ENCODE measurements at regions of chr5 and their contacts with region 1.

Region 1: GRCh38 chr5:61331407-61332357 is at the start of gene ZSWIM6:
- DNase-seq: peak; percentile 98
- H3K4me3 ChIP-seq: peak within 1 kb of the TSS; percentile 93 to 96 (median 94)
- H3K27ac ChIP-seq: peak within 1 kb of the TSS; percentile 75
- H3K4me1 ChIP-seq: peaks cover 43% of the 10 kb centered on the region
- H3K27me3 ChIP-seq: no peaks in the 10 kb centered on the region
- CTCF ChIP-seq: no peak
- total RNA-seq, gene ZSWIM6: 9.3 to 9.7 TPM

Region 2: DNA sequence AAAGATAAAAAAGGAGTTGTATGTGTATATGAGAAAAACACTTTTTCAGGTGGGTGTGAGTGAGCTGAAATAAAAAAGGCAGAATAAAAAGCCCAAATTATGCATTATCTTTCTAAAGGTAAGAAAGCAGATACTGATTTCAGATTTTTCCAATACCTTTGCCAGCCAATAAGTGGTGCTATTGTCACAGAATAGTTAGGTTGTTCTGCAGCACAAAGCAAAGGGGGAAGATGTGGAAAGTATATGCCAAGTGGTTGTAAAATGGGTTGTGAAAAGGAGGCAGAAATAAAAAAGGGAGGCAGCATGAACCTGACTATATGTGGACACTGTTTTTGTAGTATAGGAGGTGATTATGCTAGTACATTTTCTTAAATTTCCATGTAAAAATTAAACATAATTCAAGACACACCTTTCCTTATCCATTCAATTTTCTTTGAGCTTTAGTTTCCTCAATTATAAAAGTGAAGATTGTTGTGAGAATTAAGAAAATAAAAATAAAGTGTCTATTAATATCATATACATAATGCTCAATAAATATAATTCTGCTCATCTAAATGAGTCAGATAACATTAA is 276.2 kb before region 1 on chr5:
- CTCF ChIA-PET with region 1: no interaction called
- dilution Hi-C with region 1: no loop called
- in situ Hi-C with region 1: no loop called
- intact Hi-C with region 1: loop called (anchors 1 kb)
- DNase-seq: peak; percentile 40
- H3K4me3 ChIP-seq: no peak overlapping the region
- H3K27ac ChIP-seq: no peak overlapping the region
- H3K4me1 ChIP-seq: peaks cover 34% of the 10 kb centered on the region
- H3K27me3 ChIP-seq: no peaks in the 10 kb centered on the region
- CTCF ChIP-seq: peak; percentile 73 to 85

Region 3: DNA sequence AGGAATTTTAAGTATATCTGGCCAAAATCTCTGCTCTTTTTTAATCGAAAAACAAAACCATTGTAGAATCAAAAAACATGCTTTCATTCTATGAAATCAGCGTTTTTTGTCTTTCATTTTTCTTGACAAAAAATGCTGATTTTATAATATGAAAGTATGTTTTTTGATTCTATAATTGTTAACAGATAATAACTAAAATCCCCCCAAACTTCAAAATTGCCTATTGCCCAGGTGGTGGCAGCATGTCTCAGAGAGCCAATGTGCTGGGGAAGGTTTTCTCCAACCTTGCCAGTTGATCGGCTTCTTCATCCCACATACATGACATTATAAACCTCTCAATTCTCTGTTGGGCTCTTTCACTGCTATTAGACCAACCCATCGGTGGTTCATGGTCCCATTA is 164.3 kb before region 1 on chr5:
- CTCF ChIA-PET with region 1: no interaction called
- dilution Hi-C with region 1: no loop called
- in situ Hi-C with region 1: loop called in 1 of 2 experiments (anchors 10 kb)
- intact Hi-C with region 1: loop called (anchors 1 kb)
- DNase-seq: peak; percentile 32
- H3K4me3 ChIP-seq: no peak overlapping the region
- H3K27ac ChIP-seq: no peak overlapping the region
- H3K4me1 ChIP-seq: peaks cover 5% of the 10 kb centered on the region
- H3K27me3 ChIP-seq: no peaks in the 10 kb centered on the region
- CTCF ChIP-seq: peak; percentile 40 to 62

Region 4: DNA sequence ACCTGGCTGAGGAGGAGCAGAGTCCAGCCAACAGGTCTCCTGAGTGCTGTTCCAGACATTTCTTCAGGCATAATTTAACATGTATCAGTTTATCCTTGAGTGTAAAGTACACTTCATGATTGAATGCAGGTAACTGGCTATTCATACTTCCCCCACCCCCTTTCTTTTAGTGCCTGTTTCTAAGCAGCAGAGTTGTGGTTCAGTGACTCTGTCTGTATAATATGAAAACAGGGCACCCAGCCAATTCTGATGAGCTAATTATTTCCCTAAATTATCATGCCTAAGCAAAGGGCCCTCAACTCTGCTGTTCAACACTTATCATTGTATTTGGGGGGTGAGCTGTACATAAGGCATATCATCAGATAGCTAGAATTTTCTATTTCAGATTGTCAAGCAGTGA is 51.5 kb before region 1 on chr5:
- CTCF ChIA-PET with region 1: no interaction called
- dilution Hi-C with region 1: no loop called
- in situ Hi-C with region 1: no loop called
- intact Hi-C with region 1: loop called (anchors 1 kb)
- DNase-seq: peak; percentile 89
- H3K4me3 ChIP-seq: no peak overlapping the region
- H3K27ac ChIP-seq: peak overlapping the region; percentile 52
- H3K4me1 ChIP-seq: peaks cover 34% of the 10 kb centered on the region
- H3K27me3 ChIP-seq: no peaks in the 10 kb centered on the region
- CTCF ChIP-seq: no peak

Region 5: GRCh38 chr5:61408476-61409168 is 76.9 kb after region 1 on chr5:
- CTCF ChIA-PET with region 1: no interaction called
- dilution Hi-C with region 1: no loop called
- in situ Hi-C with region 1: no loop called
- intact Hi-C with region 1: loop called (anchors 1 kb)
- DNase-seq: peak; percentile 100
- H3K4me3 ChIP-seq: peak overlapping the region; percentile 2 to 54 (median 35)
- H3K27ac ChIP-seq: peak overlapping the region; percentile 100
- H3K4me1 ChIP-seq: peaks cover 21% of the 10 kb centered on the region
- H3K27me3 ChIP-seq: no peaks in the 10 kb centered on the region
- CTCF ChIP-seq: no peak

Region 6: GRCh38 chr5:61631438-61631941 is 299.8 kb after region 1 on chr5:
- CTCF ChIA-PET with region 1: no interaction called
- dilution Hi-C with region 1: no loop called
- in situ Hi-C with region 1: no loop called
- intact Hi-C with region 1: no loop called
- DNase-seq: no peak
- H3K4me3 ChIP-seq: no peak overlapping the region
- H3K27ac ChIP-seq: no peak overlapping the region
- H3K4me1 ChIP-seq: no peaks in the 10 kb centered on the region
- H3K27me3 ChIP-seq: no peaks in the 10 kb centered on the region
- CTCF ChIP-seq: no peak

Region 7: GRCh38 chr5:61658592-61659008 is 326.9 kb after region 1 on chr5:
- CTCF ChIA-PET with region 1: no interaction called
- dilution Hi-C with region 1: no loop called
- in situ Hi-C with region 1: no loop called
- intact Hi-C with region 1: loop called (anchors 1 kb)
- DNase-seq: peak; percentile 55
- H3K4me3 ChIP-seq: no peak overlapping the region
- H3K27ac ChIP-seq: no peak overlapping the region
- H3K4me1 ChIP-seq: no peaks in the 10 kb centered on the region
- H3K27me3 ChIP-seq: no peaks in the 10 kb centered on the region
- CTCF ChIP-seq: peak; percentile 92 to 95

Region 8: GRCh38 chr5:61809651-61810050 is 478.0 kb after region 1 on chr5:
- CTCF ChIA-PET with region 1: no interaction called
- dilution Hi-C with region 1: no loop called
- in situ Hi-C with region 1: no loop called
- intact Hi-C with region 1: no loop called
- DNase-seq: peak; percentile 91
- H3K4me3 ChIP-seq: no peak overlapping the region
- H3K27ac ChIP-seq: no peak overlapping the region
- H3K4me1 ChIP-seq: peaks cover 33% of the 10 kb centered on the region
- H3K27me3 ChIP-seq: no peaks in the 10 kb centered on the region
- CTCF ChIP-seq: no peak